ENCODE measurements at regions of chr2 and their contacts with region 1.

Region 1: GRCh38 chr2:18749912-18750526 is 160.7 kb upstream of the NT5C1B start:
- DNase-seq: no peak
- H3K4me3 ChIP-seq: no peak overlapping the region
- H3K27ac ChIP-seq: no peak overlapping the region
- H3K4me1 ChIP-seq: no peaks in the 10 kb centered on the region
- H3K27me3 ChIP-seq: no peaks in the 10 kb centered on the region
- CTCF ChIP-seq: peak in 5 of 6 experiments; percentile 51 to 79 (median 74)
- POLR2A ChIP-seq: no peak

Region 2: GRCh38 chr2:18209919-18210639 is 539.9 kb before region 1 on chr2:
- intact Hi-C with region 1: no loop called
- DNase-seq: no peak
- H3K4me3 ChIP-seq: no peak overlapping the region
- H3K27ac ChIP-seq: no peak overlapping the region
- H3K4me1 ChIP-seq: peaks cover 0 to 9% (median 0%) of the 10 kb centered on the region in 3 donors
- H3K27me3 ChIP-seq: peaks cover 0 to 88% (median 0%) of the 10 kb centered on the region in 4 donors
- CTCF ChIP-seq: no peak
- POLR2A ChIP-seq: no peak

Region 3: GRCh38 chr2:18520451-18521425 is 229.3 kb before region 1 on chr2:
- intact Hi-C with region 1: loop called (anchors 10 kb)
- DNase-seq: no peak
- H3K4me3 ChIP-seq: no peak overlapping the region
- H3K27ac ChIP-seq: peak overlapping the region in 3 of 4 donors; percentile 45 to 68 (median 65)
- H3K4me1 ChIP-seq: peaks cover 0 to 24% (median 0%) of the 10 kb centered on the region in 3 donors
- H3K27me3 ChIP-seq: peaks cover 0 to 13% (median 0%) of the 10 kb centered on the region in 4 donors
- CTCF ChIP-seq: peak; percentile 60 to 91 (median 86)
- POLR2A ChIP-seq: no peak

Region 4: DNA sequence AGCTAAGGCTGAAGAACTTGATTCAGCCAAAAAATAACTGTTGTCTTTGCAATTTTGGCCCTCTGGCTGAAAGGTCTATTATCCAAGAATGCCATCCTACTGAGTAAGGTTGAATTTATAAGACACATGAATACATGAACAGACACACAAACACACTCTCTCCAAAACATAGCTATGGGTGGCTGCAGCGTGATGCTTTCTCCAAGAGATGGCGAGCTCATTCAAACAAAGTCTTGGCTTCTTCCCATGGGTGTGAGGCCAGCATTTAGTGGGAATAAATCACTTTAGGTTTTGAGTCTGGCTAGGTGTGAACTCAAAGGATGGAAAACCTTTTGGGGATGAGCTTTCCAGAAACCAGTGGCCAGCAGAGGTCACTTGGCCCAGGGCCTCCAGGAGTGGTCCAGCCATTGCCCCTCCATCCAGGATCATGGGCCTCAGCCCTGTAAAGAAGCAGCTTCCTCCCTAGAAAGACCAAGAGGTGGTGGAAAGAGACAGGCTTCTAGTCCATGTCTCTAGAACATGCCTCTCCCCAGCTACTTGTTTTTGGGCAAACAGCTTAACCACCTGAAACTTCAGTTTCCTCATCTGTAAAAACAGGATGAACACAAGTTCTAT is 619.4 kb after region 1 on chr2:
- intact Hi-C with region 1: loop called (anchors 5 kb)
- DNase-seq: no peak
- H3K4me3 ChIP-seq: no peak overlapping the region
- H3K27ac ChIP-seq: no peak overlapping the region
- H3K4me1 ChIP-seq: no peaks in the 10 kb centered on the region
- H3K27me3 ChIP-seq: peaks cover 0 to 17% (median 0%) of the 10 kb centered on the region in 4 donors
- CTCF ChIP-seq: peak in 2 of 6 experiments; percentile 7 to 32
- POLR2A ChIP-seq: no peak

Region 5: GRCh38 chr2:19863303-19864041 is 1113.5 kb after region 1 on chr2:
- intact Hi-C with region 1: loop called (anchors 10 kb)
- DNase-seq: no peak
- H3K4me3 ChIP-seq: peak overlapping the region in 3 of 4 donors; percentile 5 to 45 (median 6)
- H3K27ac ChIP-seq: no peak overlapping the region
- H3K4me1 ChIP-seq: peaks cover 4 to 42% (median 13%) of the 10 kb centered on the region in 3 donors
- H3K27me3 ChIP-seq: peaks cover 0 to 2% (median 0%) of the 10 kb centered on the region in 4 donors
- CTCF ChIP-seq: peak; percentile 85 to 96 (median 90)
- POLR2A ChIP-seq: no peak